Left lung (tissue), 14 donors: ENCODE measurements at regions of chr22 and their contacts with region 1.

Region 1: GRCh38 chr22:36331306-36331911 is 56.4 kb downstream of the MYH9 start:
- DNase-seq: peak in 3 of 4 donors; percentile 61 to 94 (median 90)
- ATAC-seq: peak; percentile 59
- H3K4me3 ChIP-seq: peak overlapping the region in 1 of 2 donors; percentile 3
- H3K27ac ChIP-seq: peak overlapping the region; percentile 90 to 94
- H3K4me1 ChIP-seq: peaks cover 88 to 100% of the 10 kb centered on the region in 2 donors
- H3K27me3 ChIP-seq: no peaks in the 10 kb centered on the region
- CTCF ChIP-seq: no peak

Region 2: DNA sequence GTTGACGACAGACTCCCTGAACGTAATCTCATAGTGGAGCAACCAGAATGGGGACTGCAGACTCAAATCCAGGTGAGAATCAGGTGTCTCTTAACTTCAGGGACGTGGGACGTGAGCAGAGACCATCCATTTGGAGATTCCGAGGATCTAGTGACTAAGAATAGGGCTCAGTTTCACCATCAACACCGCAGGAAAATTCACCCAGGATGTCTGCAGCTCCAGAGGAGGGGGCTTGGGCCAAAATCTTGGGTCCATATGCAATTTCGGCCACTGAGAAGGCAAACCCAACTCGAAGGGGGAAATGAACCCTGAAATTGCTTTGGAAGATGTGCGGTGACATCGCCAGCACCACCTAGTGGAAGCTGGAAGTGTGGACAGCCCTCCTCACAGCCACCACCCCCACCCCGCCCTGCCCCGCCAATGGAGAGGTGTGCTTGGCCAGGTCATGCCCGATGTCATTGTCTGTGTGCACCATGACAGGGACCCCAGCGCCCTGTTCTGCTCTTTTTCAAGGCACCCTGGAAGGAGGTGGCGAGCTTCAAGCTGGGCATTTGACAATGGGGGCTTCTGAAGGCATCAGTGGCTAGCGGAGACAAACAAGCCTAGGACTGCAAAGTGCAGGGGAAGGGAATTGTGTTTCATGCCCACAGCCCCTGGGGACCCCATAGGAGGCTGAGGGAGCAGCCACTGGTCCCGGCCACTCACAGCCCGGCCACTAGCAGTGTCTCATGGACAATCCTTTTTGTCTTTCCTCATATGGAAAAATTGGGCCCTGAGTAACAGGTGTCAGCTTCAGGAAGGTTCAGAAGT is 53.7 kb before region 1 on chr22:
- intact Hi-C with region 1: no loop called
- DNase-seq: peak in 3 of 4 donors; percentile 29 to 63 (median 51)
- ATAC-seq: peak; percentile 85
- H3K4me3 ChIP-seq: no peak overlapping the region
- H3K27ac ChIP-seq: no peak overlapping the region
- H3K4me1 ChIP-seq: peaks cover 6 to 17% of the 10 kb centered on the region in 2 donors
- H3K27me3 ChIP-seq: no peaks in the 10 kb centered on the region
- CTCF ChIP-seq: peak; percentile 63 to 73

Region 3: GRCh38 chr22:36374603-36375024 is 43.2 kb after region 1 on chr22:
- intact Hi-C with region 1: loop called in 1 of 2 experiments (anchors 5 kb)
- DNase-seq: no peak
- ATAC-seq: peak; percentile 11
- H3K4me3 ChIP-seq: no peak overlapping the region
- H3K27ac ChIP-seq: peak overlapping the region; percentile 87 to 99
- H3K4me1 ChIP-seq: peaks cover 69 to 100% of the 10 kb centered on the region in 2 donors
- H3K27me3 ChIP-seq: no peaks in the 10 kb centered on the region
- CTCF ChIP-seq: no peak

Region 4: DNA sequence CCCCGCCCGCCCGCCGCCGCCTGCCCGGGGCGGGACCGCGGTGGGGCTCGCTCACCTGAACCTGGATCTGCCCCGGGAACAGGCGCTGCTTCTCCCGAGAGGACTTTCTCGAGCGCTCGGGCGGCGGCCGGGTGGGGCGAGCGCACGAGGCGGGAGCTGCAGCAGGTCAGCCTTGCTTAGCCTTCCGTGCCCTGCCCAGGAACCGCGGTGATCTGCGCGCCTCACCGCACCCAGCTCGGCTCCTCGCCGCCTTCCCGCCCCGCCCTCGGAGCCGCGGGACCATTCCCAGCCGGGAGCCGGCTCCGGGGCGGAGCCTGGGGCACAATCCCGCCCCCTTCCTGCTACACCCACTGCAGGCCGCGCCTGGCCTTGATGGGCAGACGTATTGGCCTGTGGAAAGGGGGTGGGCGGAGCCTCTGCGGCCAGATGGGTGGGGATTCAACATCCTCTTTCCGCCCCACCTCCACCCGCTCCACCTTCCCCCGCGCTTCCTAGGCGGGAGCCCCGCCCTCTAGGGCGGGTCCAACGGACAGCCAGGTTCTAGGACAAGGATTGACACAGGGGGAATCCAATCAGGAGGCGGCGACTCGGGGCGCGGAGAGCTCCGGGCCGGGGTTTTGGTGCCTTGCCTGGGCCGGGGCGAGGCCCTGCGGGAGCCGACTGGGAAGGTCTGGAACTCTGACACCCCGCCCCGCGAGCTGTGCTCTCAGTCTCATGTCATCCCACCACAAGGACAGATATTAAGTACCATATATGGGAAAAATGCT is 56.5 kb after region 1 on chr22 and contains the start of gene MYH9:
- intact Hi-C with region 1: loop called in 1 of 2 experiments (anchors 10 kb)
- DNase-seq: peak; percentile 99 to 100 (median 100)
- ATAC-seq: peak; percentile 90
- H3K4me3 ChIP-seq: peak within 1 kb of the TSS; percentile 96 to 97
- H3K27ac ChIP-seq: peak within 1 kb of the TSS; percentile 96 to 99
- H3K4me1 ChIP-seq: peaks cover 16 to 62% of the 10 kb centered on the region in 2 donors
- H3K27me3 ChIP-seq: no peaks in the 10 kb centered on the region
- CTCF ChIP-seq: no peak
- polyA plus RNA-seq, gene MYH9: 225 to 278 (median 252) TPM

Region 5: DNA sequence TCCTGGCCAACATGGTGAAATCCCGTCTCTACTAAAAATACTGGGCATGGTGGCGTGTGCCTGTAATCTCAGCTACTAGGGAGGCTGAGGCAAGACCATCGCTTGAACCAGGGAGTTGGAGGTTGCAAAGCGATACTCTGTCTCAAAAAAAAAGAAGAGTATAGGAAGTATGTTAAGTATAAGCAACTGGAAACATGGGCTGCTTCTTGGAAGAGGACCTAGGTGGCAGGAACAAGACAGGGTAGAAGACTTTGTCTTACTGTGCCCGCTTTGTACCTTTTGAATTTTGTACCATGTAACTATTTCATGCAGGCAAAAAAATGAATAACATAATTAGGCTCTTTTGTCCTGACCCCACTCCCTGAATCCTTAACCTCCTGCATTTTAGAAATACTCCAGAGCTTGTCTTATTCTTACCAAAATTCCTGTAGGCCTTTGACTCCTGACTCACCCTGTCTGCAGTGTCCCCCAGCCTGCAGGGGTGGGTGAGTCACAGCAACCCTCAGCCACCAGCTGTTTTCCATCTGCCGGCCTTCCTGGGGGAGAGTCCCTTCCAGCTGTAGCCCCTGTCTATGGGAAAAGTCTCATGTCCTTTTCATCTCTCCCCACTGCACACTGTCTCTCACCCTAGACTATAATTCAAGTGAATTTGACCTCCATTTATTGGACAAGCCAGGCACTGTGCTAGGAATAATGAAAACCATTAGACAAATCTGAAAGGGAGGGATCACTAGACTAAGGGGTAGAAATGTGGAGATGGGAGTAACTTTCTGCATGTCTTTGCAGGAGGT is 108.3 kb after region 1 on chr22:
- intact Hi-C with region 1: no loop called
- DNase-seq: peak in 1 of 4 donors; percentile 63
- ATAC-seq: peak; percentile 52
- H3K4me3 ChIP-seq: no peak overlapping the region
- H3K27ac ChIP-seq: peak overlapping the region in 1 of 2 donors; percentile 20
- H3K4me1 ChIP-seq: peaks cover 11 to 63% of the 10 kb centered on the region in 2 donors
- H3K27me3 ChIP-seq: no peaks in the 10 kb centered on the region
- CTCF ChIP-seq: no peak

Region 6: GRCh38 chr22:36461669-36462649 is 130.6 kb after region 1 on chr22:
- intact Hi-C with region 1: loop called (anchors 10 kb)
- DNase-seq: peak in 3 of 4 donors; percentile 36 to 87 (median 80)
- ATAC-seq: peak; percentile 78
- H3K4me3 ChIP-seq: no peak overlapping the region
- H3K27ac ChIP-seq: peak overlapping the region; percentile 77 to 86
- H3K4me1 ChIP-seq: peaks cover 33 to 60% of the 10 kb centered on the region in 2 donors
- H3K27me3 ChIP-seq: no peaks in the 10 kb centered on the region
- CTCF ChIP-seq: no peak